GM13977 (cell line): ENCODE measurements at regions of chr5 and their contacts with region 1.

Region 1: GRCh38 chr5:140639148-140639979 is at the start of gene TMCO6:
- DNase-seq: peak; percentile 99
- CTCF ChIP-seq: peak; percentile 60

Region 2: DNA sequence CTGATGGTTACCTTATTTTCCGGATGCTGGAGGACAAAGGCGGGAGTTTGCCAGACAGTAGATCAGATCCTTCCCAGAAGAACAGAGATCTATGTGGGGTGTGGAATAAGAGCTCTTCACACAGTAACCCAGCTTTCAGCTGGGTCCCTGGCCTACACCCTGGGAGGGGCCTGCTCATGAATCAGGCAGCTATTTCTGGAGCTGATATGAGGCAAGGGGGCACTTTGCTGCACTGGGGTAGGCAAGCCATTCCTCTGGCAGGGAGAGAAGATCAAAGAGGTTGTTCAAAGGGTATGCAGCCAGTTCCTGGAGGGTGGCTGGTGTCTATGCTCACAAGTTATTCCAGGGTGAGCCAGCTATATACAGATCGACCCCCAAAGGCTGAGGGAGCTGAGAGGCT is 415.8 kb before region 1 on chr5:
- in situ Hi-C with region 1: no loop called
- DNase-seq: no peak
- CTCF ChIP-seq: no peak

Region 3: GRCh38 chr5:140372971-140373487 is 266.3 kb before region 1 on chr5:
- in situ Hi-C with region 1: loop called (anchors 10 kb)
- DNase-seq: peak; percentile 56
- CTCF ChIP-seq: peak; percentile 88